PC-9 (cell line): ENCODE measurements at regions of chr2 and their contacts with region 1.

Region 1: GRCh38 chr2:105557021-105557920 is 158.4 kb upstream of the FHL2 start:
- DNase-seq: no peak
- H3K4me3 ChIP-seq: no peak overlapping the region
- H3K27ac ChIP-seq: no peak overlapping the region
- H3K4me1 ChIP-seq: peaks cover 20% of the 10 kb centered on the region
- H3K27me3 ChIP-seq: peaks cover 74% of the 10 kb centered on the region
- CTCF ChIP-seq: no peak

Region 2: DNA sequence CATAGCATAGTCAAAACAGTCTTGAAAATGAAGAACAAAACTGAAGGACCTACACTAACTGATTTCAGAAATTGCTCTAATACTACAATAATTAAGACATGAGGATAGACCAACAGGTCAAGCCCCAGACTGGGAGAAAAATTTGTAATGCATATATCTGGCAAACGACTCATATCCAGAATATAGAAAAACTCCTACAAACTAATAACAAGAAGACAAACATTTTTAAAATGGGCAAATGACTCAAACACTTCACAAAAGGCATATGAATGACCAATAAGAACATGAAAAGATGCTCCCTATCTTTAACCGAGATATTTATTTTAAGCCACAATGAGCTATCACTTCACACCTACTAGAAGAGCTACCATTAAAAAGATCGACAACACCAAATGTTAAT is 242.0 kb before region 1 on chr2:
- CTCF ChIA-PET with region 1: interaction called, 10 read pairs
- POLR2A ChIA-PET with region 1: no interaction called
- intact Hi-C with region 1: no loop called
- DNase-seq: no peak
- H3K4me3 ChIP-seq: no peak overlapping the region
- H3K27ac ChIP-seq: no peak overlapping the region
- H3K4me1 ChIP-seq: no peaks in the 10 kb centered on the region
- H3K27me3 ChIP-seq: no peaks in the 10 kb centered on the region
- CTCF ChIP-seq: no peak